ENCODE measurements at regions of chr3 and their contacts with region 1.

Region 1: GRCh38 chr3:193780810-193781472 is 187.9 kb downstream of the OPA1 start:
- DNase-seq: peak; percentile 68 to 75
- H3K4me3 ChIP-seq: no peak overlapping the region
- H3K27ac ChIP-seq: no peak overlapping the region
- H3K4me1 ChIP-seq: peaks cover 0 to 21% of the 10 kb centered on the region in 2 donors
- H3K27me3 ChIP-seq: no peaks in the 10 kb centered on the region
- CTCF ChIP-seq: peak; percentile 28 to 83 (median 70)
- POLR2A ChIP-seq: peak in 1 of 2 donors; percentile 6

Region 2: GRCh38 chr3:193928354-193929209 is 147.6 kb after region 1 on chr3:
- intact Hi-C with region 1: no loop called
- DNase-seq: peak; percentile 20 to 21
- H3K4me3 ChIP-seq: no peak overlapping the region
- H3K27ac ChIP-seq: no peak overlapping the region
- H3K4me1 ChIP-seq: peaks cover 5 to 10% of the 10 kb centered on the region in 2 donors
- H3K27me3 ChIP-seq: no peaks in the 10 kb centered on the region
- CTCF ChIP-seq: no peak
- POLR2A ChIP-seq: no peak

Region 3: GRCh38 chr3:194134757-194135528 is 354.0 kb after region 1 on chr3:
- intact Hi-C with region 1: loop called (anchors 5 kb)
- DNase-seq: peak; percentile 93 to 94
- H3K4me3 ChIP-seq: peak overlapping the region; percentile 19 to 58 (median 47)
- H3K27ac ChIP-seq: peak overlapping the region; percentile 94 to 97 (median 95)
- H3K4me1 ChIP-seq: peaks cover 29 to 32% of the 10 kb centered on the region in 2 donors
- H3K27me3 ChIP-seq: no peaks in the 10 kb centered on the region
- CTCF ChIP-seq: peak in 1 of 6 experiments; percentile 14
- POLR2A ChIP-seq: peak in 1 of 2 donors; percentile 65